Activated B cell treated with CpG ODN at 0.5 μM for 24 hours (primary cell): ENCODE measurements at regions of chr14 and their contacts with region 1.

Region 1: GRCh38 chr14:94485944-94486841 is 10.2 kb upstream of the SERPINA9 start:
- DNase-seq: peak; percentile 50
- ATAC-seq: peak; percentile 43
- H3K4me3 Mint-ChIP-seq: peak overlapping the region; percentile 52
- H3K27ac Mint-ChIP-seq: no peak overlapping the region
- H3K4me1 Mint-ChIP-seq: peaks cover 34% of the 10 kb centered on the region
- H3K27me3 Mint-ChIP-seq: peaks cover 18% of the 10 kb centered on the region
- CTCF ChIP-seq: peak; percentile 98

Region 2: DNA sequence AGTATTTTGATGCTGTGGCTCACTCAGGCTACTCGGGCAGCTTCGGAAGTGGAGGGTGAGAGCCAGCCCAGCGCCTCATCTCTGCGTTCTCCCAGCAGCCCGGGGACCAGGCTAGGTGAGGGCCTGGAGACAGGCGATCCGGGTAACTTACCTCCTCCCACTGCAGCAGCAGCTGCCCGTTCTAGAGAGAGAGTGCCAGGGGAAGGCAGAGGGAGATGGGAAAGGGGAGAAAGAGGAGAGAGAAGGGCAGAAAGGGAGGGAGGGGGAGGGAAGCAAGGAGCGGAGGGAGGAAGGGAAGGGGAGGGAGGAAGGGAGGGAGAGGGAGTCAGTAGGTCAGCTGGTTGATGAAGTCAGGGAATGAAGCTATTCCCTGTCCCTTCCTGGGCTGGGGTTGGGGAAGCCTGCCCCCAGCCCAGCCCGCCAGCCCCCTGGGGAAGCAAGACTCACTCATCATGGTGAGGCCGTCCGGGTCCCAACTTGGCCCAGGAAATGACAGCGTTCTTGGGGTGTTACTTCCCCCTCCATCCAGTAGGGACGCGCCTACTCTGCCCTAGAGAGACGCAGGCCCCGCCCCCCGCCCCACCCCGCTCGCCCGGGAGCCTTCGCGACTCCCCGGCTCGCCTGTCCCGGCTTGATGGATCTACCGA is 357.0 kb before region 1 on chr14 and contains the start of gene IFI27L2:
- CTCF ChIA-PET with region 1: no interaction called
- POLR2A ChIA-PET with region 1: no interaction called
- intact Hi-C with region 1: loop called (anchors 2 kb)
- DNase-seq: peak; percentile 41
- ATAC-seq: peak; percentile 98
- H3K4me3 Mint-ChIP-seq: peak within 1 kb of the TSS; percentile 88
- H3K27ac Mint-ChIP-seq: peak within 1 kb of the TSS; percentile 54
- H3K4me1 Mint-ChIP-seq: peaks cover 19% of the 10 kb centered on the region
- H3K27me3 Mint-ChIP-seq: peaks cover 6% of the 10 kb centered on the region
- CTCF ChIP-seq: no peak
- total RNA-seq, gene IFI27L2: 37.0 and 37.3 TPM in 2 replicates

Region 3: GRCh38 chr14:94423453-94424056 is 62.6 kb before region 1 on chr14:
- CTCF ChIA-PET with region 1: interaction called, 28 read pairs
- POLR2A ChIA-PET with region 1: no interaction called
- intact Hi-C with region 1: no loop called
- DNase-seq: peak; percentile 21
- ATAC-seq: no peak
- H3K4me3 Mint-ChIP-seq: no peak overlapping the region
- H3K27ac Mint-ChIP-seq: no peak overlapping the region
- H3K4me1 Mint-ChIP-seq: no peaks in the 10 kb centered on the region
- H3K27me3 Mint-ChIP-seq: peaks cover 7% of the 10 kb centered on the region
- CTCF ChIP-seq: no peak

Region 4: DNA sequence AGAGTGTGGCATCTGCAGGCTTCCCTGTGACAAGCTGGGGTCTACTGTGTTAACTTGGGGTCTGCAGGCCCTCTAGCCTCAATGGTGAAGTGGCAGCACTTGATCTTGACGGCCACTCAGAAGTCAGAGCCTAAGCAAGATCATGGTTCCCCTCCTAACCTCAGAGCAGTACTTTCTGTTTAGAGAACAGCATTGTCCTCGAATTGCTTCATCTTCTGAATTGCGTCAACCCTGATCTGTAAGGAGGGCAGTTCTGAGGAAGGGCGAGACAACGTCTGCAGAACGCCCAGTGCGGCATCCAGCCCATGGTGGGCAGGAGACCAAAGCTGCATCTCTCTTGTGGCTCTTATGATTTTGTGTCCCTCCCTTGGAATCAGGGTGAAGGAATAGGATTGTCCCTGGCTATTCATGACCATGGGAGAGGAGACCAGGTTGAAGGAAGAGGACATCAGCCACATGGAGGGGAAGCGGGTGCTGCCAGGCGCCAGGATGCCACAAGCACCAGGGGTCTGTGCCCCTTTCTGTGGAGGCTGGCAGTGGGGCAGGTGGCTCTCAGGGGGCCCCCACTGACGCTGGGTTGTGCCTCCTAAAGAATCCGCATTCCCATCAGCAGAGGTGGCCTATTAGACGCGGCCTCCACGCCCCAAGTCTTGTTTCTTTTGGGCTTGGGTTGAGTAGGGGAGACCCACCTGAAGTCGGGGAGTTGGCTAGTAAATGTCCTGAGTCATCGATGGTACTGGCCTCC is 12.4 kb before region 1 on chr14:
- CTCF ChIA-PET with region 1: interaction called, 10 read pairs
- POLR2A ChIA-PET with region 1: no interaction called
- intact Hi-C with region 1: loop called (anchors 1 kb)
- DNase-seq: no peak
- ATAC-seq: peak; percentile 40
- H3K4me3 Mint-ChIP-seq: peak overlapping the region; percentile 16
- H3K27ac Mint-ChIP-seq: peak overlapping the region; percentile 27
- H3K4me1 Mint-ChIP-seq: peaks cover 22% of the 10 kb centered on the region
- H3K27me3 Mint-ChIP-seq: peaks cover 3% of the 10 kb centered on the region
- CTCF ChIP-seq: no peak

Region 5: GRCh38 chr14:95340201-95340697 is 854.1 kb after region 1 on chr14:
- CTCF ChIA-PET with region 1: no interaction called
- POLR2A ChIA-PET with region 1: no interaction called
- intact Hi-C with region 1: no loop called
- DNase-seq: no peak
- ATAC-seq: no peak
- H3K4me3 Mint-ChIP-seq: no peak overlapping the region
- H3K27ac Mint-ChIP-seq: no peak overlapping the region
- H3K4me1 Mint-ChIP-seq: no peaks in the 10 kb centered on the region
- H3K27me3 Mint-ChIP-seq: peaks cover 20% of the 10 kb centered on the region
- CTCF ChIP-seq: no peak